ENCODE measurements at regions of chr7 and their contacts with region 1.

Region 1: GRCh38 chr7:127585044-127585953 is at the start of gene GCC1:
- DNase-seq: peak; percentile 86 to 98 (median 93)
- ATAC-seq: peak; percentile 61 to 86 (median 78)
- H3K4me3 ChIP-seq: peak within 1 kb of the TSS; percentile 56 to 97 (median 82)
- H3K27ac ChIP-seq: peak within 1 kb of the TSS; percentile 79 to 88 (median 85)
- H3K4me1 ChIP-seq: peaks cover 20 to 39% (median 22%) of the 10 kb centered on the region in 3 donors
- H3K27me3 ChIP-seq: no peaks in the 10 kb centered on the region
- CTCF ChIP-seq: no peak
- total RNA-seq, gene GCC1: 6.5 to 12.2 (median 7.0) TPM

Region 2: DNA sequence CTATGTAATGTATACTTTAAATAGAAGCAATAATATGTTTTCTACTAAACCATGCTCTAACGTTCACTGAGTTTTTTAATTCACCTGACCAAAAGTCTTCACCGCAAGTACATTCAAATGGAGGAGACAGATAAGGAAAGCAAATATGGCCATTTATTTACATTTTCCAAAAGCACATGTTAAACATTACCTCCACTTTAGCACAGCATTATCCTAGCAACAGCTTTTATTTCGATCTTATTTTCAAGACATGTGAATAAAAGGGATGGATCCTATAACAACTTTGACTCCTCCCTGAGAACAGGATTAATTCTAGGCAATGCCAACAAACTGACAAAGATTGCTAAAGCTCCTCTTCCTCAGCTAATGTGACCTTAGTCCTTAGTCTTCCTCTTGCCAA is 321.1 kb before region 1 on chr7:
- intact Hi-C with region 1: no loop called
- DNase-seq: no peak
- ATAC-seq: peak in 1 of 4 donors; percentile 49
- H3K4me3 ChIP-seq: no peak overlapping the region
- H3K27ac ChIP-seq: no peak overlapping the region
- H3K4me1 ChIP-seq: peaks cover 0 to 5% (median 0%) of the 10 kb centered on the region in 3 donors
- H3K27me3 ChIP-seq: no peaks in the 10 kb centered on the region
- CTCF ChIP-seq: no peak

Region 3: GRCh38 chr7:127387974-127388373 is 197.3 kb before region 1 on chr7:
- intact Hi-C with region 1: loop called in 1 of 3 experiments (anchors 5 kb)
- DNase-seq: no peak
- ATAC-seq: no peak
- H3K4me3 ChIP-seq: no peak overlapping the region
- H3K27ac ChIP-seq: no peak overlapping the region
- H3K4me1 ChIP-seq: peaks cover 0 to 30% (median 18%) of the 10 kb centered on the region in 3 donors
- H3K27me3 ChIP-seq: no peaks in the 10 kb centered on the region
- CTCF ChIP-seq: no peak

Measured in pancreas (tissue), 10 donors.